ENCODE measurements at regions of chr17 and their contacts with region 1.

Region 1: DNA sequence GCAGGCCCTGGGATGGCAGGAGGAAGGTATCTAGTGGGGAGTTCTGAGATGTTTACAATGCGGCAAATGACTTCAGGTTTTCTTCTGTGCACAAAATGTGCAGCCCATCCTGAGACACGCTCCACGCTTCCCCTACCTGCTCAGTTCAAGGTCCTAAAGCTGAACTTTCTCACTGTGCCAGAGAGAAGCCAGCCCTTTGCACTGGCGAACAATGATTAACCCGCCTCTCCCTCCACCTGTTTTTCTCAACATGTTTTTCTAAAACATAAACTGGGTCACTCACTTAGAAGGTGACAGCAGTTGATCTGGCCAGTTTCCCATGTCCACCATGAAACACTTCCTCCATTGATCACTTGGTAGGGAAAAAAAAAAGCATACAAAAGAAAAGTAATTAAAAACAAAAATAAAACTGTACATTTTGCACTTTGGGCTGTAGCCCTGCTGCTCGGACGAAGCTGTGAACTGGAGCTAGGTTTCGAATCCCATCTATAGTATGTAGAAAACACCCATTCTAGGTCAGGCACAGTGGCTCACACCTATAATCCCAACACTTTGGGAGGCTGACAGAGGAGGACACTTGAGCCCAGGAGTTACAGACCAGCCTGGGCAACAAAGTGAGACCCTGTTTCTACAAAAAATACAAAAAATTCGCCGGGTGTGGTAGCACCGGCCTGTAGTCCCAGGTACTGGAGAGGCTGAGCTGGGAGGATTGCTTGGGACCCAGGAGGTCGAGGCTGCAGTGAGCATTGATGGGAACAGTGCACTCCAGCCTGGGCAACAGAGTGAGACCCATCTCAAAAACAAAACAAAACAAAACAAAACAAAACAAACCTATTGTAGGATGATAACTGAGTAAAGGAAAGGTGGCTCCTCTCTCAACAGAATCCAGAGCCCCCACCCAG is 6.1 kb upstream of the G6PC1 start:
- DNase-seq: no peak
- ATAC-seq: no peak

Region 2: DNA sequence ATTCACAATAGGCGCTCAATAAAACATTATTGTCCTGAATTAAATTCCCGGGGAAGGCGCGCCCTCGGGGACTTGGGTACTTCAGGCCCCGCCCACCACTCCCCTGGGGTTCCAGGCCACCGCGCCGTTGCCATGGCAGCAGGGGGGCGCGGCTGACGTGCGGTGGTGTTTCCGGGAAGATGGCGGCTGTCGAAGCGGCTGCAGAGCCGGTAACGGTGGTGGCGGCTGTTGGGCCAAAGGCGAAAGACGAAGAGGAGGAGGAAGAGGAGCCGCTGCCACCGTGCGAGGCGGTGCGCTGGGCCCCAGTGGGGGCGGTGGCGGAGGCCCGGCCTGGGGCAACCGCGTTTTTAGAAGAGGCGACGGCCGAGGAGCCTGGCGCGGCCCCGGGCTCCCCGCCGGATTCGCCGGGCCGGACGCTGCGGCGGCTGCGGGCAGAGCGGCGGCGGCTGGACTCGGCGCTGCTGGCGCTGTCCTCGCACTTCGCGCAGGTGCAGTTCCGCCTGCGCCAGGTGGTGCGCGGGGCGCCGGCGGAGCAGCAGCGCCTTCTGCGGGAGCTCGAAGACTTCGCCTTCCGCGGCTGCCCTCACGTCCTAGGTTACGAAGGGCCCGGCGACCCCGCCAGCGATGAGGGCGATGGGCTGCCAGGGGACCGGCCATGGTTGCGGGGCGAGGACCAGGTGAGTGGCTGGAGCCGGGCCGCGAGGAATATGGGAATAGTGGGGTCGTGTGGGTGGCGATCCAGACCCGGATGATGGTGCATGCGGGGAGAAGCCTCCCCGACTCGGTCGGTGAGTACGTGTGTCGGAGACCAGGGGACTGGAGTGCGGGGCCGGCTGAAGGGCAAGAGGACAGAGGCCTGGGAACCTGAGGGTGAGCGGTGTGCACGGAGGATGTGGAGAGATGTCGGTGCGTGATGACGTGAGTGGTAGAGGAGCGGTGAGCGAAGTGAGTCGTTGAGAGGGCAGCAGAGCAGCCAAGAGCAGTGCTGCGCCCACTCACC is 86.2 kb after region 1 on chr17 and contains the start of gene RUNDC1:
- intact Hi-C with region 1: loop called (anchors 1 kb)
- DNase-seq: peak; percentile 95
- ATAC-seq: peak; percentile 96
- total RNA-seq, gene RUNDC1: 12.4 TPM